Caco-2 (cell line): ENCODE measurements at regions of chr20 and their contacts with region 1.

Region 1: GRCh38 chr20:22794200-22794599 is 209.8 kb upstream of the FOXA2 start:
- DNase-seq: peak; percentile 62 to 69
- H3K4me3 ChIP-seq: no peak overlapping the region
- H3K4me3 Mint-ChIP-seq: peak overlapping the region; percentile 41
- H3K27ac Mint-ChIP-seq: peak overlapping the region; percentile 91
- H3K4me1 ChIP-seq: peaks cover 60% of the 10 kb centered on the region
- H3K4me1 Mint-ChIP-seq: peaks cover 27% of the 10 kb centered on the region
- H3K27me3 ChIP-seq: no peaks in the 10 kb centered on the region
- H3K27me3 Mint-ChIP-seq: no peaks in the 10 kb centered on the region
- CTCF ChIP-seq: no peak

Region 2: DNA sequence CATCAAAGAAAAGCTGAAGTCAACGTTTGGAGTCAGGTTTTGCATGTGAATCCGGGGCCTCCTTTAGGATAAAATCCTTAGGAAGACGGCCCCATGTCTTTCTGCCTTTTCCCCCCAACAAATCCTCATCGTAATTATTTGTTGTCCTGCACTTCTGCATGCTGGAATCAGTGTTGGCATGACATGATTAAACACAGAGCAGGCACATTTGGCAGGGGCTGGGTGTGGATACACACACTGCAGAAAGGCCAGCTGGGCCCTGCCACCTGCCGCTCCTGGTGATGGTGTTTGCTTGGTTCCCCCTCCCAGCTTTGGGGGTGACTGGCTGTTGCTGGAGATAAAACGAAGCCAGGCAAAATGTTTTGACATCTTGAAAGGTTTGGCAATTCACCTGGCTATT is 163.5 kb before region 1 on chr20:
- CTCF ChIA-PET with region 1: no interaction called
- POLR2A ChIA-PET with region 1: no interaction called
- intact Hi-C with region 1: no loop called
- DNase-seq: no peak
- H3K4me3 ChIP-seq: no peak overlapping the region
- H3K4me3 Mint-ChIP-seq: no peak overlapping the region
- H3K27ac Mint-ChIP-seq: no peak overlapping the region
- H3K4me1 ChIP-seq: no peaks in the 10 kb centered on the region
- H3K4me1 Mint-ChIP-seq: no peaks in the 10 kb centered on the region
- H3K27me3 ChIP-seq: no peaks in the 10 kb centered on the region
- H3K27me3 Mint-ChIP-seq: peaks cover 4% of the 10 kb centered on the region
- CTCF ChIP-seq: no peak

Region 3: GRCh38 chr20:22768266-22769178 is 25.7 kb before region 1 on chr20:
- CTCF ChIA-PET with region 1: interaction called, 4 read pairs
- POLR2A ChIA-PET with region 1: interaction called, 3 read pairs
- intact Hi-C with region 1: loop called (anchors 1 kb)
- DNase-seq: peak; percentile 74 to 77
- H3K4me3 ChIP-seq: no peak overlapping the region
- H3K4me3 Mint-ChIP-seq: peak overlapping the region; percentile 32
- H3K27ac Mint-ChIP-seq: peak overlapping the region; percentile 88
- H3K4me1 ChIP-seq: peaks cover 61% of the 10 kb centered on the region
- H3K4me1 Mint-ChIP-seq: peaks cover 56% of the 10 kb centered on the region
- H3K27me3 ChIP-seq: no peaks in the 10 kb centered on the region
- H3K27me3 Mint-ChIP-seq: no peaks in the 10 kb centered on the region
- CTCF ChIP-seq: no peak

Region 4: DNA sequence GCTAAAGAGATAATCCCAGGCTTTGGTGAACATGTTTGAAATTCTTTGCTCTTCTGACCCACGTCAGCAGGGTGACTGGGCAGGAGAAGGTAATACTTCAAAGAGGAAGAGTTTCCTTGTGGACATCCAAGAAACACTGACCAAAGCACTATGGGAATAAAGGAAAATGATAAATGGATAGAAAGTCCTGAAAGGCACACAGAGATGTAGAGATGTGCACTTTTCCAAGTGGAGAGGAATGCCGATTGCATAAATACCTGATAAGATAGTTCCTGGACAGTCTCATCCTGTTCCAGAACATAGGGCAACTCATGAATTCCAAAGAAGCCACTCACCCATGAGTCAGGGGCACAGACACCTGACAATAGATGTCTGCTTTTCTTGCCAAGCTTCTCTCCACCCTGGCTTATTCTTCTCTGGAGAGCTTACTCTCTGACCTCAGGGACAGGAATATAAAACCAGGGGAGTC is 18.5 kb before region 1 on chr20:
- CTCF ChIA-PET with region 1: no interaction called
- POLR2A ChIA-PET with region 1: interaction called, 3 read pairs
- intact Hi-C with region 1: loop called (anchors 1 kb)
- DNase-seq: peak; percentile 64 to 78
- H3K4me3 ChIP-seq: no peak overlapping the region
- H3K4me3 Mint-ChIP-seq: peak overlapping the region; percentile 31
- H3K27ac Mint-ChIP-seq: peak overlapping the region; percentile 56
- H3K4me1 ChIP-seq: peaks cover 56% of the 10 kb centered on the region
- H3K4me1 Mint-ChIP-seq: peaks cover 56% of the 10 kb centered on the region
- H3K27me3 ChIP-seq: no peaks in the 10 kb centered on the region
- H3K27me3 Mint-ChIP-seq: no peaks in the 10 kb centered on the region
- CTCF ChIP-seq: no peak

Region 5: GRCh38 chr20:22805219-22805618 is 11.0 kb after region 1 on chr20:
- CTCF ChIA-PET with region 1: interaction called, 3 read pairs
- POLR2A ChIA-PET with region 1: no interaction called
- intact Hi-C with region 1: loop called (anchors 1 kb)
- DNase-seq: peak in 1 of 2 experiments; percentile 29
- H3K4me3 ChIP-seq: no peak overlapping the region
- H3K4me3 Mint-ChIP-seq: no peak overlapping the region
- H3K27ac Mint-ChIP-seq: no peak overlapping the region
- H3K4me1 ChIP-seq: peaks cover 38% of the 10 kb centered on the region
- H3K4me1 Mint-ChIP-seq: peaks cover 36% of the 10 kb centered on the region
- H3K27me3 ChIP-seq: no peaks in the 10 kb centered on the region
- H3K27me3 Mint-ChIP-seq: no peaks in the 10 kb centered on the region
- CTCF ChIP-seq: no peak

Region 6: DNA sequence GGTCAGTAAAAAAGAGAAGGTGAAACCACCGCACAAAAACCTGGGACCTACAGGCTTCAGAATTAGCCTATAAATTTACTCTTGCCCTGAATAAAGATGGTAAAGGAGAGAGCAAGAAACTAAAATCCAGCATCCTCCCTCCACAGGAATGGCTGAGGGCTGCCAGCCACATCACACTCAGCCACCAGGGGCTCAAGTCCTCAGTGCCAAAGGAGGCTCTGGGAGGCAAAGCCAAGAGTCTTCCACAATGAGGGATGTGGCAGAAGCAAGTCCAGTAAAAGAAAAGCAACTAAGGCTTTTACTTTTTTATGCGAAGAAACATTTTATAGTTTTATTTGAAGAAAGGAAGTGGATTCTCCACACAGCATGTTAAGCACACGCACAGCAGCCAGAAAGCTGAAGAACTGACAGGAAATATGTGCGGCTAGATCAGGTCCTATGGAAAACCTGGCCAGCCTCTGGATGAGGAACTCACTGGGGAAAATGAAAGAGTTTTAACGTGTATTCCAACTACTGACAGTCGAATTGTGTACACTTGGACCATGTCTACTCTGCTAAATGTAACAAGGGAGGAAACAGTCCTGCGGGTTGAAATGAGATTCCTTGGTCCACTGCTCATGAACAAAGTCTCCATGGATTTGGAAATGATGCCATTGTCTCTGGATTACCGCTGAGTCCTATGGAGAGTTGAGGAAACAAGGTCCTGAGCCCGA is 21.6 kb after region 1 on chr20:
- CTCF ChIA-PET with region 1: no interaction called
- POLR2A ChIA-PET with region 1: no interaction called
- intact Hi-C with region 1: no loop called
- DNase-seq: no peak
- H3K4me3 ChIP-seq: no peak overlapping the region
- H3K4me3 Mint-ChIP-seq: no peak overlapping the region
- H3K27ac Mint-ChIP-seq: no peak overlapping the region
- H3K4me1 ChIP-seq: no peaks in the 10 kb centered on the region
- H3K4me1 Mint-ChIP-seq: peaks cover 4% of the 10 kb centered on the region
- H3K27me3 ChIP-seq: no peaks in the 10 kb centered on the region
- H3K27me3 Mint-ChIP-seq: no peaks in the 10 kb centered on the region
- CTCF ChIP-seq: peak; percentile 17 to 33